ENCODE measurements at regions of chr5 and their contacts with region 1.

Region 1: GRCh38 chr5:142800776-142801494 is 30.8 kb downstream of the ARHGAP26 start:
- DNase-seq: peak in 8 of 9 donors; percentile 46 to 70 (median 64)
- ATAC-seq: peak; percentile 63
- H3K4me3 ChIP-seq: peak overlapping the region; percentile 41
- H3K4me3 Mint-ChIP-seq: peak overlapping the region; percentile 66 to 88 (median 79)
- H3K27ac ChIP-seq: peak overlapping the region; percentile 58
- H3K27ac Mint-ChIP-seq: peak overlapping the region; percentile 80 to 98 (median 93)
- H3K4me1 ChIP-seq: peaks cover 53 to 66% of the 10 kb centered on the region in 2 donors
- H3K4me1 Mint-ChIP-seq: peaks cover 53 to 71% (median 64%) of the 10 kb centered on the region in 7 donors
- H3K27me3 ChIP-seq: no peaks in the 10 kb centered on the region
- H3K27me3 Mint-ChIP-seq: no peaks in the 10 kb centered on the region

Region 2: GRCh38 chr5:142783601-142784341 is 17.2 kb before region 1 on chr5:
- CTCF ChIA-PET with region 1: interaction called, 3 read pairs
- POLR2A ChIA-PET with region 1: interaction called, 3 read pairs
- intact Hi-C with region 1: loop called (anchors 1 to 2 kb)
- DNase-seq: peak in 1 of 9 donors; percentile 56
- ATAC-seq: peak; percentile 66
- H3K4me3 ChIP-seq: peak overlapping the region; percentile 43
- H3K4me3 Mint-ChIP-seq: peak overlapping the region in 4 of 10 donors; percentile 18 to 62 (median 48)
- H3K27ac ChIP-seq: no peak overlapping the region
- H3K27ac Mint-ChIP-seq: peak overlapping the region in 6 of 9 donors; percentile 42 to 60 (median 48)
- H3K4me1 ChIP-seq: peaks cover 27 to 82% of the 10 kb centered on the region in 2 donors
- H3K4me1 Mint-ChIP-seq: peaks cover 39 to 78% (median 56%) of the 10 kb centered on the region in 7 donors
- H3K27me3 ChIP-seq: no peaks in the 10 kb centered on the region
- H3K27me3 Mint-ChIP-seq: no peaks in the 10 kb centered on the region

Region 3: GRCh38 chr5:142821733-142822487 is 21.0 kb after region 1 on chr5:
- CTCF ChIA-PET with region 1: interaction called, 3 read pairs
- POLR2A ChIA-PET with region 1: interaction called, 4 read pairs
- intact Hi-C with region 1: loop called (anchors 1 to 2 kb)
- DNase-seq: no peak
- ATAC-seq: peak; percentile 80
- H3K4me3 ChIP-seq: no peak overlapping the region
- H3K4me3 Mint-ChIP-seq: no peak overlapping the region
- H3K27ac ChIP-seq: no peak overlapping the region
- H3K27ac Mint-ChIP-seq: peak overlapping the region in 1 of 9 donors; percentile 1
- H3K4me1 ChIP-seq: peaks cover 0 to 24% of the 10 kb centered on the region in 2 donors
- H3K4me1 Mint-ChIP-seq: peaks cover 12 to 59% (median 36%) of the 10 kb centered on the region in 7 donors
- H3K27me3 ChIP-seq: no peaks in the 10 kb centered on the region
- H3K27me3 Mint-ChIP-seq: no peaks in the 10 kb centered on the region

Region 4: GRCh38 chr5:142826741-142827732 is 26.1 kb after region 1 on chr5:
- CTCF ChIA-PET with region 1: interaction called, 3 read pairs
- POLR2A ChIA-PET with region 1: interaction called, 4 read pairs
- intact Hi-C with region 1: loop called in 1 of 2 experiments (anchors 1 kb)
- DNase-seq: peak in 1 of 9 donors; percentile 33
- ATAC-seq: peak; percentile 64
- H3K4me3 ChIP-seq: no peak overlapping the region
- H3K4me3 Mint-ChIP-seq: no peak overlapping the region
- H3K27ac ChIP-seq: no peak overlapping the region
- H3K27ac Mint-ChIP-seq: no peak overlapping the region
- H3K4me1 ChIP-seq: peaks cover 0 to 32% of the 10 kb centered on the region in 2 donors
- H3K4me1 Mint-ChIP-seq: peaks cover 27 to 81% (median 51%) of the 10 kb centered on the region in 7 donors
- H3K27me3 ChIP-seq: no peaks in the 10 kb centered on the region
- H3K27me3 Mint-ChIP-seq: no peaks in the 10 kb centered on the region